ENCODE measurements at regions of chr13 and their contacts with region 1.

Region 1: DNA sequence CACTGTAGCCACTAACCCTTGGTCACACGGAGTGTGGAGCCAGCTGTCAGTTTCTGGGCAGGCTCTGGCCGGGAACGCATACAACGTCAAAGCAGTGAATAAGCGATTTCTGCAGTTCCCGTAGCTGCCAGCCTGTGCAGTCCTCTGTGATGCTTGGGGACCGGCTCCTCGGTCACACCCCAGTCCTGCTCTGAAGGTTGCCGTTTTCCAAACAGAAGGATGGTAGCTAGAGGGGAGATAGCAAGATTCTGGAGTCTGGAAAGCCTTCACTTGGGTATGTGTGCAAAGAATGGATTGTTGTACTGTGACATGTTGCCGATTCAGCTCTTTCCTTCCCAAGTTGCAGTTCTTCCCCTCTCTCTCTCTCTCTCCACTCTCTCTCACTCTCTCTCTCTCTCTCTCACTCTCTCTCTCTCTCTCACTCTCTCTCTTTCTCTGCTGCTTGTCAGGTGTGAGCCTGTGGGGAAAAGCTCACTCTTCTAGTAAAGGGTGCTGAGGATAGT is 38.7 kb upstream of the C1QTNF9 start:
- DNase-seq: peak; percentile 76
- ATAC-seq: peak; percentile 52
- H3K4me3 ChIP-seq: peak overlapping the region; percentile 40 to 71 (median 62)
- H3K4me3 Mint-ChIP-seq: peak overlapping the region; percentile 89
- H3K27ac ChIP-seq: peak overlapping the region; percentile 84 to 89
- H3K27ac Mint-ChIP-seq: peak overlapping the region; percentile 98
- H3K4me1 ChIP-seq: peaks cover 55 to 66% of the 10 kb centered on the region in 2 donors
- H3K4me1 Mint-ChIP-seq: peaks cover 73% of the 10 kb centered on the region
- H3K27me3 ChIP-seq: no peaks in the 10 kb centered on the region
- H3K27me3 Mint-ChIP-seq: no peaks in the 10 kb centered on the region
- CTCF ChIP-seq: peak; percentile 13

Region 2: DNA sequence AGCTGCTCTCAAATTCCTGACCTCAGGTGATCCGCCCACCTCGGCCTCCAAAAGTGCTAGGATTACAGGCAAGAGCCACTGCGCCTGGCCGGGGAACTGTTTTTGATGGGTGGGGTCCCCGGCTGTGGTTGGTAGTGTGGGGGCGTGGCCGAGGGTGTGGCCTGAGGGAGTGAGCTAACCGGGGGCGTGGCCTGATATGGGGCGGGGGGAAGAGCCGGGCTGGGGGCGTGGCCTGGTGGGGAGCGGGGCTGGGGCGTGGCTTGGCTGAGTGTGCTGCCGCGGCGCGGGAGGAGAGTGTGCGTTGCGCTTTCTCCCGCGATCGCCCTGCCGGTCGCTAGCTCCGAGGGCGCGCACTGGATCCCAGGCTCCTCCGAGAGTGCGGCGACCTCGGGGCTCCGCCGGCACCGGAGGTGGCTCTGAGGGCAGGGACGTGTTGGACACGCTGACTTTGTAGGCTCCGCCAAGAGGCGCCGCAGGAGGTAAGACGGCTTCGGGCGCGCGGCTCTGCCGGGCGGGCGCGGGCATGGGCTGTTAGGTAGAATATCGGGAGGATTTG is 110.2 kb before region 1 on chr13 and contains the start of gene SPATA13:
- CTCF ChIA-PET with region 1: interaction called, 3 read pairs
- POLR2A ChIA-PET with region 1: no interaction called
- intact Hi-C with region 1: loop called (anchors 2 kb)
- DNase-seq: peak; percentile 92
- ATAC-seq: peak; percentile 95
- H3K4me3 ChIP-seq: peak within 1 kb of the TSS; percentile 6 to 80 (median 74)
- H3K4me3 Mint-ChIP-seq: peak within 1 kb of the TSS; percentile 87
- H3K27ac ChIP-seq: no peak within 1 kb of the TSS
- H3K27ac Mint-ChIP-seq: peak within 1 kb of the TSS; percentile 37
- H3K4me1 ChIP-seq: peaks cover 9 to 20% of the 10 kb centered on the region in 2 donors
- H3K4me1 Mint-ChIP-seq: peaks cover 18% of the 10 kb centered on the region
- H3K27me3 ChIP-seq: peaks cover 0 to 32% (median 11%) of the 10 kb centered on the region in 4 experiments
- H3K27me3 Mint-ChIP-seq: peaks cover 22% of the 10 kb centered on the region
- CTCF ChIP-seq: no peak
- total RNA-seq, gene SPATA13: 8.3 and 8.8 TPM in 2 replicates

Region 3: GRCh38 chr13:24187185-24187584 is 83.5 kb before region 1 on chr13:
- CTCF ChIA-PET with region 1: no interaction called
- POLR2A ChIA-PET with region 1: no interaction called
- intact Hi-C with region 1: no loop called
- DNase-seq: no peak
- ATAC-seq: no peak
- H3K4me3 ChIP-seq: no peak overlapping the region
- H3K4me3 Mint-ChIP-seq: no peak overlapping the region
- H3K27ac ChIP-seq: no peak overlapping the region
- H3K27ac Mint-ChIP-seq: no peak overlapping the region
- H3K4me1 ChIP-seq: no peaks in the 10 kb centered on the region
- H3K4me1 Mint-ChIP-seq: peaks cover 5% of the 10 kb centered on the region
- H3K27me3 ChIP-seq: no peaks in the 10 kb centered on the region
- H3K27me3 Mint-ChIP-seq: no peaks in the 10 kb centered on the region
- CTCF ChIP-seq: no peak

Region 4: DNA sequence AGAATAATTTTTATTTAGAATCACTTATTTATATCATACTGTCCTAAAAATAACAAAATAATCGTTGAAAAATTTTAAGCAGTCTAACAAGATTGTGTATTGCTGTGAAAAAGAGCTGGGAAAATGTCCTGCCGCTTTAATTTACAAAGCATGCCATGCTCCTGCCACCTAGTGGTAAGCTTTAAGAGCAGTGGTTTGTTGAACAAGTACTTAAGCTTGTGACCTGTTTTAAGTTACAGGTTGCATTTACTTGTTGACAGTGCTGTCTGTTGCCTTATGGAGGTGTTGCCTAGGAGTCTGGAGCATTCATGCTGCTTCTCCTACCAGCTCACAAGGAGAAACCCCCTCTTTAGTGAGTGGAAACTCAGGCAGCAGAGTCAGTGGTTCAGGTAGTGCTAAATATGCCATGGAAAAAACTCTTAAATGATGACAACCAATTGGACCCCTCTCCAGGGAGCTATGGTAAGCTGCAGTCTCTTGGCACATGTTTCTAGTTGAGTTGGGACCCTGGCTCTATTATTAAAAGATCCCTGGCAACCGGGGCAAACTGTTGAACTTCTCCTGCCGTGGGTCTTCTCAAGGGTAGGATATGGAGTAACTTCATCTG is 41.7 kb before region 1 on chr13:
- CTCF ChIA-PET with region 1: interaction called, 16 read pairs
- POLR2A ChIA-PET with region 1: no interaction called
- intact Hi-C with region 1: loop called (anchors 5 kb)
- DNase-seq: peak; percentile 66
- ATAC-seq: peak; percentile 53
- H3K4me3 ChIP-seq: no peak overlapping the region
- H3K4me3 Mint-ChIP-seq: no peak overlapping the region
- H3K27ac ChIP-seq: no peak overlapping the region
- H3K27ac Mint-ChIP-seq: no peak overlapping the region
- H3K4me1 ChIP-seq: peaks cover 10 to 20% of the 10 kb centered on the region in 2 donors
- H3K4me1 Mint-ChIP-seq: peaks cover 26% of the 10 kb centered on the region
- H3K27me3 ChIP-seq: no peaks in the 10 kb centered on the region
- H3K27me3 Mint-ChIP-seq: no peaks in the 10 kb centered on the region
- CTCF ChIP-seq: peak; percentile 93

Region 5: DNA sequence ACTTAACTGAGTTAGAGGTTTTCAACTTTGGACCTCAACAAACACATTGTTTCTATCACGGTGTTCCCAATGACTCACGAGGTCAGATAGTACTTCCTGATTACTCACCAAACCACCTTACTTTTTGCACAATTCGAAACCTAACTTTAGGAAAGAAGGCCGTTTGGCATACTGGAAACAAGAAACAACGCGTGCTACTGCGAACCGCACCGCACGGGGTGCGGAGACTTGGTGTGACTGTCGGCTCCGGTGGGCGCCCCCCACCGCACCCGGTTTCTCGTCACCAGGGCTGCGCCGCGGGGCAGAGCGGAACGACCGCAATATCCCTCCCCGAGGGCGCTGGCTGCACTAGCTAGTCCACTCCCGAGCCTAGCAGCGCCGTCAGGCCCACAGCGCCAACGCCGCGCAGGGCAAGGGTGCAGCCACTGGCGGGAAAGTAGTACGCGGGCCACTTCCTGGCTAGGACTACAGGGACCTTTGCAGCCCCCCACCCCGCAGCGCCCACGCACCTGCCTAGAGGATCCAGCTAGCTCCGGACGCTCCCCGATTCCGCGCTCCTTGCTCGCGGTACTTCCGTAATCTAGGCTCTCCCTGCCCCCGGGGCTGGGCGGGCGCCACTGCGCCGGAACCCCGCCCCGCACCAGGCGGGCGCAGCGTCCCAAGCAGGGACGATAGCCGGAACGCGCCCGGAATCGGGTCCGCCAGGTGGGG is 241.7 kb after region 1 on chr13 and contains the start of gene PARP4:
- CTCF ChIA-PET with region 1: no interaction called
- POLR2A ChIA-PET with region 1: no interaction called
- intact Hi-C with region 1: loop called (anchors 5 kb)
- DNase-seq: peak; percentile 82
- ATAC-seq: peak; percentile 78
- H3K4me3 ChIP-seq: peak within 1 kb of the TSS; percentile 64 to 95 (median 86)
- H3K4me3 Mint-ChIP-seq: peak within 1 kb of the TSS; percentile 88
- H3K27ac ChIP-seq: peak within 1 kb of the TSS; percentile 57 to 81
- H3K27ac Mint-ChIP-seq: peak within 1 kb of the TSS; percentile 85
- H3K4me1 ChIP-seq: peaks cover 11 to 19% of the 10 kb centered on the region in 2 donors
- H3K4me1 Mint-ChIP-seq: peaks cover 28% of the 10 kb centered on the region
- H3K27me3 ChIP-seq: no peaks in the 10 kb centered on the region
- H3K27me3 Mint-ChIP-seq: no peaks in the 10 kb centered on the region
- CTCF ChIP-seq: no peak
- total RNA-seq, gene PARP4: 88.4 and 88.8 TPM in 2 replicates

Region 6: DNA sequence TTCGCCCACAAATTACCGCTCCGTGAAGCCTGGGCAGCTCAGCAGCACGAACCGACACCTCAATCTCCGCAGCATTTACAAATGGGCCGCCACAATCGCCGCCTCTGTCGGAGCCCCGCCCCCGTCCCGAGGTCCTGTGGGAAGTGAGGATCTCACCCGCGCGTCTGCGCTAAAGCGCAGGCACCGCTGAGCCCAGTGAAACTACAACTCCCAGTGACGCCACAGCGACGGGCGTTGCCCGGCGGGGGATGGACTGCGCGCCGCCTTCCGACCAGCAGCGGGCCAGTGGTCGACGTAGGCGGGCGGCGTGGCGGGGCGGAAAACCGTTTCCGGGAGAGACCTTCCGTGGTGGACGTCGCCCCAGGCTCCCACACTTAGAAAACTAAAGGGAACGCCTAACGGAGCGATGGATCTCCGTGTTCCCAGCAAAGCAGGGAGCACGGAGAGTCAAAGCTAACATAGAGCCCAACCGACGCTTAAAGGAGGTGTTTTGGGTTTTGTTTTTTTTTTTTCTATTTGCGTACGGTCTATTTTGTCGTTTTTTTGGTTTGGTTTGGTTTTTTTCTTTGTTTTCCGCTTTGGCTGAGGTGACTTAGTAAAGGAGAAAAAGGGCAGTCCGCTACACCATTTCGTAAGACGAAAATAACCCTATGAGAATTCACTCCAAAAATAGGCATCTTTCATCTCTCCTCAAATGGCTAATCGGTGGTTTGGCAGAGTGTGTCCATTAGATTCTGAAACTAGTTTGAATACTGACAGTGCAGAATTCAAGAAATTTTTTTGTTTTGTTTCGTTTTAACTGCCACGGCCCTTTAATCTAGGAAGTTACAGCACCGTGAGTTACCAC is 652.3 kb after region 1 on chr13:
- CTCF ChIA-PET with region 1: no interaction called
- POLR2A ChIA-PET with region 1: no interaction called
- intact Hi-C with region 1: loop called (anchors 5 kb)
- DNase-seq: peak; percentile 96
- ATAC-seq: peak; percentile 98
- H3K4me3 ChIP-seq: peak overlapping the region; percentile 94 to 96 (median 95)
- H3K4me3 Mint-ChIP-seq: peak overlapping the region; percentile 97
- H3K27ac ChIP-seq: peak overlapping the region; percentile 98
- H3K27ac Mint-ChIP-seq: peak overlapping the region; percentile 99
- H3K4me1 ChIP-seq: peaks cover 5 to 11% of the 10 kb centered on the region in 2 donors
- H3K4me1 Mint-ChIP-seq: peaks cover 15% of the 10 kb centered on the region
- H3K27me3 ChIP-seq: no peaks in the 10 kb centered on the region
- H3K27me3 Mint-ChIP-seq: no peaks in the 10 kb centered on the region
- CTCF ChIP-seq: peak; percentile 16

Region 7: DNA sequence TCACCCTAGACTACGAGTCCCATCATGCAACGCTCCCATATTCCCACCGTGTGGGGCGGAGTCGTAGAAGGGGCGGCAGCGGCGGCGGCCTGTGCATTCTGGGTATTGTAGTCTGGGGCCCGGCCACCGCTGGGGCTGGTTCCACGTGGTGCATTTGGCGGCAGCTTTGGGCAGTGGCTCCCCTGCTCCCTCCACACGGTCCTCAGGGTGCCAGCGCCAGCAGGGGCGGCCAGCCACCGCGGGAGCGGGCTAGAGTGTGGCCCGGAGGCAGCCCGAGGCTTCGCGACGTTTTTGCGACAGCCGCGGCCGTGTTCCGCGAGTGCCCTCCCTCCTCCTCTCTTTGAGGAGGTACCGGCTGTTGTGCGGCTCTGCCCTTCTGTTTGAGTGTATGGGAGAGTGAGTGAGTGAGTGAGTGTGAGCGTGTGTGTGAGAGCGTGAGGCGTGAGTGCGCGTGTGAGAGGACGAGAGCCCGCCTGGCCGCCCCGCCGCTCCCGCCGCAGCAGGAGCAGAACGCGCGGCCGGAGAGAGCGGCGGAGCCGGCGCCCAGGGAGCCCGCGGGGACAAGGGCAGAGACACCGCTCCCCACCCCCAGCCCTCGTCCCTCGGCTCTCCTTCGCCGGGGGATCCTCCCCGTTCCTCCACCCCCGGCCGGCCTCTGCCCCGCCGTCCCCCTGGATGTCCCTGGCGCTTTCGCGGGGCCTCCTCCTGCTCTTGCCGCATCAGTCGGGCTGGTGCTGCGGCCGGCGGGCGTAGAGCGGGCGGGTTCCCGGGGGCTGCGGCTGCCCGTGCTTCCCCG is 1983.3 kb after region 1 on chr13 and contains the start of gene CDK8:
- CTCF ChIA-PET with region 1: no interaction called
- POLR2A ChIA-PET with region 1: no interaction called
- intact Hi-C with region 1: loop called (anchors 10 kb)
- DNase-seq: peak; percentile 97
- ATAC-seq: peak; percentile 86
- H3K4me3 ChIP-seq: peak within 1 kb of the TSS; percentile 66 to 98 (median 77)
- H3K4me3 Mint-ChIP-seq: peak within 1 kb of the TSS; percentile 83
- H3K27ac ChIP-seq: peak within 1 kb of the TSS; percentile 72 to 80
- H3K27ac Mint-ChIP-seq: peak within 1 kb of the TSS; percentile 81
- H3K4me1 ChIP-seq: peaks cover 14 to 17% of the 10 kb centered on the region in 2 donors
- H3K4me1 Mint-ChIP-seq: peaks cover 29% of the 10 kb centered on the region
- H3K27me3 ChIP-seq: peaks cover 0 to 4% (median 2%) of the 10 kb centered on the region in 4 experiments
- H3K27me3 Mint-ChIP-seq: peaks cover 8% of the 10 kb centered on the region
- CTCF ChIP-seq: no peak
- total RNA-seq, gene CDK8: 13.5 TPM in 2 replicates